Right cardiac atrium (tissue), 5 donors: ENCODE measurements at regions of chr7 and their contacts with region 1.

Region 1: GRCh38 chr7:98168181-98168905 is 42.9 kb upstream of the BHLHA15 start:
- DNase-seq: peak in 1 of 3 donors; percentile 61
- ATAC-seq: peak; percentile 49 to 56
- H3K4me3 ChIP-seq: no peak overlapping the region
- H3K27ac ChIP-seq: no peak overlapping the region
- H3K4me1 ChIP-seq: peaks cover 4% of the 10 kb centered on the region
- H3K27me3 ChIP-seq: no peaks in the 10 kb centered on the region

Region 2: DNA sequence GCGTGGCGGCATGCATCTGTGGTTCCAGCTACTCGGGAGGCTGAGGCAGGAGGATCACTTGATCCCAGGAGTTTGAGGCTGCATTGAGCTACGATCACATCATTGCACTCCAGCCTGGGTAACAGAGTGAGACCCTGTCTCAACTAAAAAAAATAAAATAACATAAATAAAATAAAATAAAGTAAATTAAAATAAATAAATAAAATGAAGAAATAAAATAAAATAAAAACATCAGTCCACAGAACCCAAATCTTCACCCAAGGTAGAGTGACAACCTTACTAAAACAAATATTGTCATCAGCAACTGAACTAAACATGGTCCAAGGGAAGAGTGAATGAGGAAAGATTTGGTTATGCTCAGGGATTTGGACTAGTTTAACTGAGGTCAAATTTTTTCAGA is 153.5 kb before region 1 on chr7:
- intact Hi-C with region 1: loop called (anchors 2 to 5 kb)
- DNase-seq: no peak
- ATAC-seq: no peak
- H3K4me3 ChIP-seq: no peak overlapping the region
- H3K27ac ChIP-seq: no peak overlapping the region
- H3K4me1 ChIP-seq: no peaks in the 10 kb centered on the region
- H3K27me3 ChIP-seq: no peaks in the 10 kb centered on the region

Region 3: GRCh38 chr7:98021588-98022351 is 146.6 kb before region 1 on chr7:
- intact Hi-C with region 1: loop called (anchors 2 to 5 kb)
- DNase-seq: peak; percentile 75 to 93 (median 86)
- ATAC-seq: peak; percentile 82 to 89
- H3K4me3 ChIP-seq: no peak overlapping the region
- H3K27ac ChIP-seq: no peak overlapping the region
- H3K4me1 ChIP-seq: no peaks in the 10 kb centered on the region
- H3K27me3 ChIP-seq: no peaks in the 10 kb centered on the region

Region 4: DNA sequence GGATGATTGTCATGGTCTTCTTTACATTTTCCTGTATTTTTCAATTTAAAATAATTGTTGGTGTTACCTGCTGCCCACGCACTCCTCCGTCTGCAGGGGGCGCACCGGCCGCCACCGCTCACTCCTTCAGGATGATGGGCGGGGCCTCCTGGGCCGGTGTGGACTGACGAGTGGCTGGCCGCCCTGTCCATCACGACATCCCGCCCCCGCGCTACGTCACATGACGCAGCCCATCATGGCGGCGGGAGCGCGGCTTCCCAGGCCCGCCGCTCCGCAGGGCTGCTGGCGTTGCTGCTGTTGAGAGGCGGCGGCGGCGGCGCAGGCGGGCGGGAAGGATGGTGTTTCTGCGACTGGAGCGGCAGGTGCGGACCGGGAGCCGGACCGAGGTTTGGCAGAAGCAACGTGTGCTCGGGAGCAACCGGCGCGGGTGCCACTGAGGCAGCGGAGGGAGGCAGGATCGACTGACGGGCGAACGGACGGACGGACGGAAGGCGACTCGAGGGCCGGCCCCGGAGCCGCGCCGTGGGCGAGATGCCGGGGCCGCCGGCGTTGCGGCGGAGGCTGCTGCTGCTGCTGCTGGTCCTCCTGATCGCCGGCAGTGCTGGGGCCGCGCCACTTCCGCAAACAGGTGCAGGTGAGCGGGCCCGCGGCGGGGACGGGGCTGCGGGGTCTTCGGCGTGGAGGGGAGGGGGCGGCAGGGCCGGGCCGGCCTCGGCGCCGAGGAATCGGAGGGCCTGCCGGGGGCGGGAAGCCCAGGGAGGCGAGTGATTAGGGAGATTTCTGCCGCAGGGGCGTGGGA is 61.5 kb before region 1 on chr7 and contains the start of gene LMTK2:
- intact Hi-C with region 1: loop called (anchors 2 to 5 kb)
- DNase-seq: peak; percentile 95 to 99 (median 98)
- ATAC-seq: peak; percentile 100
- H3K4me3 ChIP-seq: peak within 1 kb of the TSS; percentile 85
- H3K27ac ChIP-seq: peak within 1 kb of the TSS; percentile 73
- H3K4me1 ChIP-seq: no peaks in the 10 kb centered on the region
- H3K27me3 ChIP-seq: no peaks in the 10 kb centered on the region
- total RNA-seq, gene LMTK2: 36.4 to 38.5 (median 37.1) TPM

Region 5: GRCh38 chr7:98280791-98281756 is 112.7 kb after region 1 on chr7 and contains the start of gene BRI3:
- intact Hi-C with region 1: no loop called
- DNase-seq: peak; percentile 91 to 97 (median 97)
- ATAC-seq: peak; percentile 82 to 83
- H3K4me3 ChIP-seq: peak within 1 kb of the TSS; percentile 92
- H3K27ac ChIP-seq: peak within 1 kb of the TSS; percentile 73
- H3K4me1 ChIP-seq: peaks cover 11% of the 10 kb centered on the region
- H3K27me3 ChIP-seq: no peaks in the 10 kb centered on the region
- total RNA-seq, gene BRI3: 156 to 203 (median 187) TPM

Region 6: DNA sequence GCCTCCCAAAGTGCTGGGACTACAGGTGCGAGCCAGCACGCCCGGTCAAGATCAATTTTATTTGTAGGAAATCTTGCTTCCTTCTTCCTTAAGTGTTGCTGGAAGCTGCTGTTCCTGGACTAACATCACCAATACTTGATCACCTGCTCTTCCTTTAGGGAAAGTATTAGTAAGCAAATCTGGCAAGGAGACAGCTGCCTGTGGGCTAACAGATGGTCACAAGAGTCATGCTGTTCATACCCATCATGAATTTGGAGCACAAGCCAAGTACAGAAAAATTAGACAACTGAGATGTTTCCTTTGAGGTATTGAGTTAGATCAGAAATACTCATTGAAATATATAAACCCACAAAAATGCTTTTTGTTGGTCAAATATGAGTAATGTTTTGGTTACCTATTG is 204.7 kb after region 1 on chr7:
- intact Hi-C with region 1: no loop called
- DNase-seq: no peak
- ATAC-seq: no peak
- H3K4me3 ChIP-seq: no peak overlapping the region
- H3K27ac ChIP-seq: no peak overlapping the region
- H3K4me1 ChIP-seq: no peaks in the 10 kb centered on the region
- H3K27me3 ChIP-seq: no peaks in the 10 kb centered on the region

Region 7: GRCh38 chr7:98472521-98472954 is 304.2 kb after region 1 on chr7:
- intact Hi-C with region 1: no loop called
- DNase-seq: no peak
- ATAC-seq: no peak
- H3K4me3 ChIP-seq: no peak overlapping the region
- H3K27ac ChIP-seq: no peak overlapping the region
- H3K4me1 ChIP-seq: no peaks in the 10 kb centered on the region
- H3K27me3 ChIP-seq: peaks cover 2% of the 10 kb centered on the region